ENCODE measurements at regions of chr13 and their contacts with region 1.

Region 1: GRCh38 chr13:45047394-45048310 is 58.3 kb downstream of the GPALPP1 start:
- DNase-seq: peak; percentile 86
- H3K4me3 Mint-ChIP-seq: peak overlapping the region; percentile 64
- H3K27ac Mint-ChIP-seq: no peak overlapping the region
- H3K4me1 Mint-ChIP-seq: peaks cover 10% of the 10 kb centered on the region
- H3K27me3 Mint-ChIP-seq: no peaks in the 10 kb centered on the region
- CTCF ChIP-seq: peak; percentile 92

Region 2: GRCh38 chr13:44104197-44104490 is 943.5 kb before region 1 on chr13:
- CTCF ChIA-PET with region 1: no interaction called
- POLR2A ChIA-PET with region 1: no interaction called
- intact Hi-C with region 1: no loop called
- DNase-seq: peak; percentile 2
- H3K4me3 Mint-ChIP-seq: no peak overlapping the region
- H3K27ac Mint-ChIP-seq: no peak overlapping the region
- H3K4me1 Mint-ChIP-seq: peaks cover 9% of the 10 kb centered on the region
- H3K27me3 Mint-ChIP-seq: no peaks in the 10 kb centered on the region
- CTCF ChIP-seq: no peak

Region 3: GRCh38 chr13:44969551-44970484 is 77.8 kb before region 1 on chr13:
- CTCF ChIA-PET with region 1: interaction called, 6 read pairs
- POLR2A ChIA-PET with region 1: no interaction called
- intact Hi-C with region 1: loop called (anchors 1 kb)
- DNase-seq: peak; percentile 66
- H3K4me3 Mint-ChIP-seq: no peak overlapping the region
- H3K27ac Mint-ChIP-seq: no peak overlapping the region
- H3K4me1 Mint-ChIP-seq: peaks cover 15% of the 10 kb centered on the region
- H3K27me3 Mint-ChIP-seq: no peaks in the 10 kb centered on the region
- CTCF ChIP-seq: peak; percentile 70

Region 4: GRCh38 chr13:45034342-45034741 is 13.3 kb before region 1 on chr13:
- CTCF ChIA-PET with region 1: interaction called, 13 read pairs
- POLR2A ChIA-PET with region 1: no interaction called
- intact Hi-C with region 1: no loop called
- DNase-seq: no peak
- H3K4me3 Mint-ChIP-seq: no peak overlapping the region
- H3K27ac Mint-ChIP-seq: no peak overlapping the region
- H3K4me1 Mint-ChIP-seq: no peaks in the 10 kb centered on the region
- H3K27me3 Mint-ChIP-seq: no peaks in the 10 kb centered on the region
- CTCF ChIP-seq: no peak

Region 5: GRCh38 chr13:45200701-45201227 is 153.1 kb after region 1 on chr13 and contains the start of gene KCTD4:
- CTCF ChIA-PET with region 1: interaction called, 10 read pairs
- POLR2A ChIA-PET with region 1: no interaction called
- intact Hi-C with region 1: no loop called
- DNase-seq: peak; percentile 42
- H3K4me3 Mint-ChIP-seq: no peak within 1 kb of the TSS
- H3K27ac Mint-ChIP-seq: peak within 1 kb of the TSS; percentile 8
- H3K4me1 Mint-ChIP-seq: peaks cover 34% of the 10 kb centered on the region
- H3K27me3 Mint-ChIP-seq: no peaks in the 10 kb centered on the region
- CTCF ChIP-seq: no peak
- total RNA-seq, gene KCTD4: 0.54 and 0.79 TPM in 2 replicates

Region 6: DNA sequence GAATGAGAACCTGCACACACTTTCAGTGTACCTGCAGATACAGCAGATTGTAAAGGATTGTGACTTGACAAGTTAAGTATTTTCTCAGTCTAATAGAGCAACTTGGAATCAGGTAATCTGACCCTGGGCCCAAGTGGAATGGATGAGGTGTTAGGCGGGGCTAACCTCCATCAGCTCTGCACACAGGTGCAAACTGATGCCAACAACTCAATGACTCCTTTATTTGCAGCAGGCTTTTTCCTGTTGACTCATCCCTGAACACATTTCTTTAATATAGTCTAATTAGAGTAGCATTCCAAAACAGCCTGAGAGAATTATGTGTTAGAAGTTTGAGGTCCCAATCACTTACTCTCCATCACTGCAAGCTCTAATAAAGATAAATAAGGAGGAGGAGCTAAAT is 244.5 kb after region 1 on chr13:
- CTCF ChIA-PET with region 1: interaction called, 18 read pairs
- POLR2A ChIA-PET with region 1: interaction called, 5 read pairs
- intact Hi-C with region 1: no loop called
- DNase-seq: peak; percentile 61
- H3K4me3 Mint-ChIP-seq: no peak overlapping the region
- H3K27ac Mint-ChIP-seq: no peak overlapping the region
- H3K4me1 Mint-ChIP-seq: peaks cover 13% of the 10 kb centered on the region
- H3K27me3 Mint-ChIP-seq: no peaks in the 10 kb centered on the region
- CTCF ChIP-seq: no peak

Region 7: DNA sequence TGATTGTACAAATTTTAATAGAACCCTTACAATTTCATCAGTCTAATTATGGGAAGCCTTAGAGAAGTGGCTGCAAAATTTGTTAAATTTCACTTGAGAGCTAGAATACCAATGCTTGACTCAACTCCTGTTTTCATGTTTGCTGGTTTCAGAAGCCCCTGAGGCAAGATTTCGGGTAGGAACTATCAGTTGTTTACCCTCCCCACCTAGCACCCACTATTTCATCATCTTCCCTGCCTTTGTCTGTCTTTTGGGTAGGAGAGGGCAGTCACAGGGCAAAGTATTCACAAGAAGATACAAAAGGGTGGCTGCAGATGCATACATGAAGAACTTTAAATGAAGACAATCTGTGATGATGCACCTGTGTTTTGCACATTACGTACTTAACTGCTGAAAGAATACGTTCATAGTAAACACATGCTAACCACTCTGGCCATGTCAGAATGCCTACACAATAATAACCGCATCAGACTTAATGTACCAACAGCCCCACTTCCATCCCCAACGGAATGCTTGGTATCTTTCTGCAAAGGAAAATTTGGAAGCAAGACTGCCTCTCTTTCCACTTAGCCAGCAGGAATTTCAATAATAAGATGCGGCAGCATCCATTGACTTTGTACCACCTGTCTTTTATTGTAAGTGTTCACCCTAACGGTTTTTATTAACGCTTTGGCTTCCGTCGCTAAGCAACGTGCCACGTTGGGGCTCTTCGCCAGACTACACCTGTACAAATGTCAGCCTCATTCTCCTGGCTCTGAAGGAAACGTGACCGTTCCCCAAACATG is 262.9 kb after region 1 on chr13:
- CTCF ChIA-PET with region 1: interaction called, 68 read pairs
- POLR2A ChIA-PET with region 1: interaction called, 14 read pairs
- intact Hi-C with region 1: loop called (anchors 1 kb)
- DNase-seq: no peak
- H3K4me3 Mint-ChIP-seq: peak overlapping the region; percentile 6
- H3K27ac Mint-ChIP-seq: no peak overlapping the region
- H3K4me1 Mint-ChIP-seq: peaks cover 10% of the 10 kb centered on the region
- H3K27me3 Mint-ChIP-seq: no peaks in the 10 kb centered on the region
- CTCF ChIP-seq: no peak

Region 8: GRCh38 chr13:45393941-45394570 is 346.4 kb after region 1 on chr13:
- CTCF ChIA-PET with region 1: interaction called, 3 read pairs
- POLR2A ChIA-PET with region 1: no interaction called
- intact Hi-C with region 1: loop called (anchors 1 kb)
- DNase-seq: peak; percentile 74
- H3K4me3 Mint-ChIP-seq: no peak overlapping the region
- H3K27ac Mint-ChIP-seq: no peak overlapping the region
- H3K4me1 Mint-ChIP-seq: no peaks in the 10 kb centered on the region
- H3K27me3 Mint-ChIP-seq: no peaks in the 10 kb centered on the region
- CTCF ChIP-seq: peak; percentile 71